ENCODE measurements at regions of chr22 and their contacts with region 1.

Region 1: GRCh38 chr22:24325105-24325757 is 54.6 kb downstream of the SPECC1L start:
- DNase-seq: no peak

Region 2: DNA sequence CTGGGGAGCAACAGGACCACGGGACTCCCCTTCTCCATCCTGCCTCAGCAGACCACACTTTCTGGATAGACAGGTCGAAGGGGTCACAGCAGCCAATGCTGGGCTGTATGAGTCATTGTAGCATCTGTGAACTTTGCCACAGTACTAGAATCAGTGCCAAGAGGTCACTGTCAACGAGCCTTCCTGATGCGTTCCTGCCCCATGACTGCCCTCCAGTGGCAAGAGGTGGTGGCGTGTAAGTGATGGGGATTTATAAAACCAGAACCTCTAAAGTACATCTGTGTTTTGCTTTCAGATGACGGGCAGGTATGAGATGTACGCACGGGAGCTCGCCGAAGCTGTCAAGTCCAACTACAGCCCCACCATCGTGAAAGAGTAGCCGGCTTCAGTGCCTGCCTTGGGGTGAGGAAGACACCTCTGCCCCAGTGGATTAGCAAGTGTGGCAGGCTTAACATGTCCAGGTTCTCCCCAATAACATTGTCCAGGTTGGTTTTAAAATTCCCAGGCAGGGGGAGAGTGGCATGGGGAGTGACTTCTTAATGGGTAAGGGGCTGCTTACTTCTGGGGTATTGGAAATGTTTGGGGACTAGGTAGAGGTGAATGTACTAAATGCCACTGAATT is 200.3 kb after region 1 on chr22:
- intact Hi-C with region 1: loop called (anchors 2 kb)
- DNase-seq: peak; percentile 22 to 95 (median 68)

Region 3: GRCh38 chr22:24583221-24584165 is 258.3 kb after region 1 on chr22:
- intact Hi-C with region 1: no loop called
- DNase-seq: peak in 2 of 10 donors; percentile 57 to 70